H1 (cell line): ENCODE measurements at regions of chr20 and their contacts with region 1.

Region 1: GRCh38 chr20:17617551-17618223 is 47.8 kb downstream of the DSTN start:
- DNase-seq: peak in 1 of 2 experiments; percentile 88
- H3K4me3 ChIP-seq: no peak overlapping the region
- H3K27ac ChIP-seq: no peak overlapping the region
- H3K4me1 ChIP-seq: peaks cover 0 to 2% (median 0%) of the 10 kb centered on the region in 4 experiments; a peak in 2 of 7 replicates
- H3K27me3 ChIP-seq: no peaks in the 10 kb centered on the region
- CTCF ChIP-seq: peak; percentile 84 to 95 (median 92)
- EP300 ChIP-seq: no peak
- POLR2A ChIP-seq: no peak
- RAD21 ChIP-seq: peak; percentile 98 to 99

Region 2: GRCh38 chr20:17511401-17511800 is 106.3 kb before region 1 on chr20:
- CTCF ChIA-PET with region 1: interaction called, 114 read pairs
- POLR2A ChIA-PET with region 1: interaction called, 4 read pairs
- DNase-seq: no peak
- H3K4me3 ChIP-seq: no peak overlapping the region
- H3K27ac ChIP-seq: no peak overlapping the region
- H3K4me1 ChIP-seq: no peaks in the 10 kb centered on the region
- H3K27me3 ChIP-seq: no peaks in the 10 kb centered on the region
- CTCF ChIP-seq: no peak
- EP300 ChIP-seq: no peak
- POLR2A ChIP-seq: no peak
- RAD21 ChIP-seq: no peak

Region 3: GRCh38 chr20:17536944-17537444 is 80.7 kb before region 1 on chr20:
- CTCF ChIA-PET with region 1: interaction called, 67 read pairs
- POLR2A ChIA-PET with region 1: interaction called, 3 read pairs
- DNase-seq: peak; percentile 71 to 78
- H3K4me3 ChIP-seq: no peak overlapping the region
- H3K27ac ChIP-seq: no peak overlapping the region
- H3K4me1 ChIP-seq: peaks cover 5 to 13% (median 8%) of the 10 kb centered on the region in 4 experiments; a peak in 6 of 7 replicates
- H3K27me3 ChIP-seq: no peaks in the 10 kb centered on the region
- CTCF ChIP-seq: peak; percentile 64 to 99 (median 98)
- EP300 ChIP-seq: no peak
- POLR2A ChIP-seq: no peak
- RAD21 ChIP-seq: peak; percentile 97

Region 4: GRCh38 chr20:17569616-17570346 is 47.9 kb before region 1 on chr20 and contains the start of gene DSTN:
- CTCF ChIA-PET with region 1: interaction called, 23 read pairs
- POLR2A ChIA-PET with region 1: interaction called, 7 read pairs
- DNase-seq: peak; percentile 93 to 96
- H3K4me3 ChIP-seq: peak within 1 kb of the TSS; percentile 84 to 93 (median 88)
- H3K27ac ChIP-seq: peak within 1 kb of the TSS; percentile 89
- H3K4me1 ChIP-seq: peaks cover 3 to 26% (median 15%) of the 10 kb centered on the region in 4 experiments; a peak in 6 of 7 replicates
- H3K27me3 ChIP-seq: no peaks in the 10 kb centered on the region
- CTCF ChIP-seq: no peak
- EP300 ChIP-seq: peak in 1 of 2 experiments; percentile 52; a peak in 1 of 3 replicates
- POLR2A ChIP-seq: no peak
- RAD21 ChIP-seq: peak in 1 of 2 experiments; percentile 11; a peak in 1 of 4 replicates
- total RNA-seq, gene DSTN: 208 TPM in 2 replicates

Region 5: DNA sequence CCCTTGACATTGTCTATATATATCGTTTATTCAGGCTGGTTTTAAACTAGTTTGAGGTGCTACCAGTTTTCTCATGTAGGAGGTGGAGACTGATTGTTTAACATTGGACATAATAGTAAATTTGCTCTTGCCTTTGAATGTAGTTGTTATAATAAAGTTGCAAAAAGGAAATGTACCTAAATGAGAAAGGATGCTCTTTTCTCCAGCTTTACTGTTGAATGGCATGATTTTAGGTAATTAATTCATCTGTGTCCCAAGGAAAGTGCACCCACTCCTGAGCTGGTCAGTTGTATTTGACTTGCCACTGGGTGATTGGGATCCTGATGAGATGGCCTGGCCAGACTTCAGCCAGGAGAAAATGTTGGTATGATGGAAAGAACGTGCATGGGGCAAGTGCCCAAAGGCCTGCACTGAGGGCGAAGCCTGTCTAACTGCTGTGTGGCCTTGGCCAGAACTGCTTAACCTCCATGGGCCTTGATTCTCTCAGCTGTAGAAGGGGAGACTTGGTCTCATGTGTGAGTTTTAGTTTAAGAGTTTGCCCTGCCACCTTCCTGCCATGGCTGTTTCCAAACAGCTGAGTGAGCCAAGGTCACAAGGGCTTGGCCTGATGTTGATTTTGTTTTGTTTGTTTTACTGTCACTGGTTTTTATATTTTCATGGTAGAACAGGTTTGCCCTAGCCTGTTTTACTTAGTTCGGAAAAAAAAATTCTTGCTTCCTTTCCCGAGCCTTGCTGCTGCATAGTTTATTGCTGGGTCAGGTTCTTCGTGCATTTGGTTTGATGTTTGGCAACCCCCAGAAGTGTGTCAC is 12.6 kb before region 1 on chr20:
- CTCF ChIA-PET with region 1: interaction called, 39 read pairs
- POLR2A ChIA-PET with region 1: interaction called, 6 read pairs
- DNase-seq: no peak
- H3K4me3 ChIP-seq: no peak overlapping the region
- H3K27ac ChIP-seq: no peak overlapping the region
- H3K4me1 ChIP-seq: peaks cover 0 to 11% (median 5%) of the 10 kb centered on the region in 4 experiments; a peak in 6 of 7 replicates
- H3K27me3 ChIP-seq: no peaks in the 10 kb centered on the region
- CTCF ChIP-seq: no peak
- EP300 ChIP-seq: no peak
- POLR2A ChIP-seq: no peak
- RAD21 ChIP-seq: no peak

Region 6: DNA sequence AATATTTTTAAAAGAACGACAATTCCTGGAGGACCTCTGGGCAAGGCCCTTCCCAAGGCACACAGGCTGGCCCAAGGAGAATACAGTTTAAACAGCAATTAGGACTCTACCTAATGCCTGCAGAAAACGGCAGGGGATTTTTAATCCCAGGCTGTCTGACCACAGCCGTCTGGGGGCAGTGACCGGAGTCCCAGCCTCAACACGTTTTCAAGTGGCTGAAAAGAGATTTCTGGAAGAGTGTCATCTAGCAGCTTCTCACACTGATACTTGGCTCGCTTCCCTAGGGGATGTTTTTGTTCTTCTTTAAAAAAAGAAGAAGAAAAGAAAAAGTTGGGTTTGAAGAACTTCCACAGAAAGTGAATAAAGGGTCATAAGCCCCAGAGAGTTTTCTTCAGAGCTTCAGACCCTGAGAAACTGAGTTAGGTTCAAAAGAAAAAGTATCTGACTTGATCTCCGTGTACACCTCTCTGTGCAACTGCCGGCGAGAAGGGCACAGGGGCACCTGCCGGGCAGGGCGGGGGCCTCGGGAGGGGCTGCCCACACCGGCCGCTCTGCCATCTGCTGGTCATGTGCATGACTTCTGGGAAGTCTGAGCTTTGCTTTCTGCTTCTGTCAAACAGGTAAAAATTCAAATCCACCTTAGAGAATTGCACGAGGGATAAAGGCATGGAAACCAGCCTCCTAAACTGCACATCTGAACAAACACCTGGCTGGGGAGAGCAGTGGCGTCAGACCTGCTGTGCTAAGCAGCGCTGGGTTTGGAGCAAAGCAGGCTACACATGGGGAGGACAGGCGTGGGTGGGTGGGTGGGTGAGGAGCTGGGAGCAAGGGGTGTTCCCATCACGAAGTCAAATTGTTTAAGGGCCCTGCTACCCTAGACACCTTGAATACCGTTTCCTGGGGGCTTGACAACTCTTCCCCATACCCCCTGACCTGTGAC is 31.4 kb after region 1 on chr20:
- CTCF ChIA-PET with region 1: interaction called, 11 read pairs
- POLR2A ChIA-PET with region 1: interaction called, 3 read pairs
- DNase-seq: no peak
- H3K4me3 ChIP-seq: no peak overlapping the region
- H3K27ac ChIP-seq: no peak overlapping the region
- H3K4me1 ChIP-seq: peaks cover 1 to 6% (median 3%) of the 10 kb centered on the region in 4 experiments; a peak in 5 of 7 replicates
- H3K27me3 ChIP-seq: no peaks in the 10 kb centered on the region
- CTCF ChIP-seq: peak; percentile 44 to 59 (median 46)
- EP300 ChIP-seq: no peak
- POLR2A ChIP-seq: no peak
- RAD21 ChIP-seq: peak in 1 of 2 experiments; percentile 38; a peak in 2 of 4 replicates

Region 7: DNA sequence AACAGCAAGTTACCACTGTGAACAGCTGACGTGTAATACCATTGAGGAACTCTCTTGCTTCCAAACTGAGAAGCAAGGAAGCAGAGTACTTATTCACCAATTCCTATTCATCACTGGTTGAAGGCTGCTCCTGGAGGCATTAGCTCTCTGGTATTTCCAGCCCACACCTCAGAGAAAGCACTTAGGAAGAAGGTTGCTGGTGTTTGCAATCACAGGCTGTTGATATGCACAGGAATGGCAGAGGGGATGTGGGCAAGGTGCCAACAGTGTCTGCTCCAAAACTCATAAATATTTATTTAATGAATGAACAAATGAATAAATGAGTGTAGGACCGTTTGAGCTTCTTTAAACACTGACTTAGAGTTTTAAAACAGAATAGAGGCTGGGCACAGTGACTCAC is 71.3 kb after region 1 on chr20:
- CTCF ChIA-PET with region 1: no interaction called
- POLR2A ChIA-PET with region 1: no interaction called
- DNase-seq: no peak
- H3K4me3 ChIP-seq: no peak overlapping the region
- H3K27ac ChIP-seq: no peak overlapping the region
- H3K4me1 ChIP-seq: peaks cover 0 to 5% (median 3%) of the 10 kb centered on the region in 4 experiments; a peak in 4 of 7 replicates
- H3K27me3 ChIP-seq: no peaks in the 10 kb centered on the region
- CTCF ChIP-seq: no peak
- EP300 ChIP-seq: no peak
- POLR2A ChIP-seq: no peak
- RAD21 ChIP-seq: no peak

Region 8: DNA sequence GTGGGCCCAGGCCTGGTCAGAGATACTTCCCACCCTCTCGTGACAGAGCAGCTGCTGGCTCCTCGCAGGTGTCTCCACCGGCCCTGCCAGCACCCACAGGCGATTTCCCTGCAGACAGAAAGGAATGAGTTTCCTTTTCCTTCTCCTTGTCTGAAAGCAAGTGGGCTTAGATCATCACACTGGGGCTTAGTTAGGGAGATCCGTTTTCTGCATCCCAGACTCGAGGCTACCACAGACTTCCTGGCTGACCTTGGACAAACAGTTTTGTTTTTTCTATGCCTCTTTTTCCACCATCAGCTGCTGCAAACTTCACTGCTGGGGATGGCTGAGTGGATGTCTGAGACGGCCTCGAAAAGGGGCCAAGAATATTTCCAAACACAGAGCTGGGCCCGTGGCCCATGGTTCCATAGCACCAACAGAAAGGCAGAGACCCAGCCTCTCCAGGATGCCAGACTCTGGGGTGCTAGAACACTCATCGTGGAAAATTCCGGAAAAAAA is 168.6 kb after region 1 on chr20:
- CTCF ChIA-PET with region 1: no interaction called
- POLR2A ChIA-PET with region 1: no interaction called
- DNase-seq: no peak
- H3K4me3 ChIP-seq: no peak overlapping the region
- H3K27ac ChIP-seq: no peak overlapping the region
- H3K4me1 ChIP-seq: peaks cover 0 to 4% (median 2%) of the 10 kb centered on the region in 4 experiments; a peak in 3 of 7 replicates
- H3K27me3 ChIP-seq: no peaks in the 10 kb centered on the region
- CTCF ChIP-seq: no peak
- EP300 ChIP-seq: no peak
- POLR2A ChIP-seq: no peak
- RAD21 ChIP-seq: no peak

Region 9: DNA sequence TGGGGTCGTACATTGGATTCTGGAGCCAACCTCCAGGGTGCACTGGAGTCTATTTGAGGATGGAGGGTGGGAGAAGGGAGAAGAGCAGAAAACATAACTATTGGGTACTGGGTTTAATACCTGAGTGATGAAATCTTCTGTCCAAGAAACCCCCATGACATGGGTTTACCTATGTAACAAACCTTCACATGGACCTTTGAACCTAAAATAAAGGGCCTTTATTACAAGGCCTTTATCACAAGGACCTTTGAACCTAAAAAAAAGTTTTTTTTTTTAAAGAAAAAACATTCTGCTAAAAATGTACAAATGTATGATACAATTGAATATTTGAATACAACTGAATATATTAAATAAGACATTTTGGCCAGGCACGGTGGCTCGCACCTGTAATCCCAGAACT is 632.5 kb after region 1 on chr20:
- CTCF ChIA-PET with region 1: no interaction called
- POLR2A ChIA-PET with region 1: no interaction called
- DNase-seq: no peak
- H3K4me3 ChIP-seq: no peak overlapping the region
- H3K27ac ChIP-seq: no peak overlapping the region
- H3K4me1 ChIP-seq: no peaks in the 10 kb centered on the region
- H3K27me3 ChIP-seq: no peaks in the 10 kb centered on the region; a peak in 1 of 7 replicates
- CTCF ChIP-seq: no peak
- EP300 ChIP-seq: no peak
- POLR2A ChIP-seq: no peak
- RAD21 ChIP-seq: no peak